Endothelial cell of umbilical vein (primary cell): ENCODE measurements at regions of chr17 and their contacts with region 1.

Region 1: DNA sequence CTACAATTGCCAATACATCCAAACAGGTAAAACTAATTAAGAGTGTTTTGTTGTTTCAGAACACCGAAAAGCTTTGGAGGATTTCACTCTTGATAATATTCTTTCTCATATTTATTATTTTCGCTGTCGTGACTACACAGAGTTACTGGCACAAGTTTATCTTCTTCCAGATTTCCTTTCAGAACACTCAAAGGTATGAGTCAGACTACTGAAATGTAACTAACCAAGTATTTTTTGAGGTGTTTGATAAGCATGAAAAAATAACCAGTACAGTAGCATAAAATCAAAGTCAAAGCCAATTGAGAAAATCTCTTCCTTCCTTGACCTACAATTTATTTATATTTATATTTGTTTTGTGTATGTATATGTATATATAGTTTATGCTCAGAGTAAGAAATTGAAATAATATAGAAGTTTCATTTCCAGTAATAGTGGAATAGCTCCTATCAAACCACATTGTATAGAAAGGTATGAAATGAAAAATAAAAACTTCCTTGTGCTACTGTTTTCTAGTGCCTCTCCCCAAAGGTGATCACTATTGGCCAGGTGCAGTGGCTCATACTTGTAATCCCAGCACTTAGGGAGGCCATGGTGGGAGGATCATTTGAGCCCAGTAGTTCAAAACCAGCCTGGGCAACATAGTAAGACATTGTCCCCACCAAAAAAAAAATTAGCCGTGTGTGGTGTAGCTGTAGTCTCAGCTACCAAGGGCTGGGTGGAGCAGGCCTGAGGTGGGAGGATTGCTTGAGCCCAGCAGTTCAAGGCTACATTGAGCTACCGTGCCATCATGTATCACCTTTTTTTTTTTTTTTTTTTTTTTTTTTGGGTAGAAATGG is 11.0 kb downstream of the RAD51C start:
- DNase-seq: peak; percentile 86
- H3K4me3 ChIP-seq: peak overlapping the region in 1 of 3 experiments; percentile 15
- H3K27ac ChIP-seq: peak overlapping the region; percentile 97
- H3K4me1 ChIP-seq: peaks cover 18% of the 10 kb centered on the region
- H3K27me3 ChIP-seq: no peaks in the 10 kb centered on the region
- CTCF ChIP-seq: no peak
- POLR2A ChIP-seq: peak; percentile 40

Region 2: GRCh38 chr17:58692239-58693055 is 10.9 kb before region 1 on chr17 and contains the start of gene RAD51C:
- CTCF ChIA-PET with region 1: interaction called, 7 read pairs
- POLR2A ChIA-PET with region 1: interaction called, 3 read pairs
- dilution Hi-C with region 1: no loop called
- intact Hi-C with region 1: loop called (anchors 1 kb)
- DNase-seq: peak; percentile 82
- H3K4me3 ChIP-seq: peak within 1 kb of the TSS; percentile 8 to 69 (median 65)
- H3K27ac ChIP-seq: peak within 1 kb of the TSS; percentile 50
- H3K4me1 ChIP-seq: peaks cover 14% of the 10 kb centered on the region
- H3K27me3 ChIP-seq: no peaks in the 10 kb centered on the region
- CTCF ChIP-seq: no peak
- POLR2A ChIP-seq: peak; percentile 87
- total RNA-seq, gene RAD51C: 38.9 and 50.5 TPM in 2 replicates

Region 3: GRCh38 chr17:58734040-58734872 is 30.9 kb after region 1 on chr17:
- CTCF ChIA-PET with region 1: no interaction called
- POLR2A ChIA-PET with region 1: no interaction called
- dilution Hi-C with region 1: no loop called
- intact Hi-C with region 1: no loop called
- DNase-seq: no peak
- H3K4me3 ChIP-seq: no peak overlapping the region
- H3K27ac ChIP-seq: no peak overlapping the region
- H3K4me1 ChIP-seq: no peaks in the 10 kb centered on the region
- H3K27me3 ChIP-seq: no peaks in the 10 kb centered on the region
- CTCF ChIP-seq: no peak
- POLR2A ChIP-seq: no peak

Region 4: GRCh38 chr17:58789160-58789559 is 85.8 kb after region 1 on chr17:
- CTCF ChIA-PET with region 1: no interaction called
- POLR2A ChIA-PET with region 1: no interaction called
- dilution Hi-C with region 1: no loop called
- intact Hi-C with region 1: no loop called
- DNase-seq: no peak
- H3K4me3 ChIP-seq: no peak overlapping the region
- H3K27ac ChIP-seq: no peak overlapping the region
- H3K4me1 ChIP-seq: peaks cover 2% of the 10 kb centered on the region
- H3K27me3 ChIP-seq: no peaks in the 10 kb centered on the region
- CTCF ChIP-seq: no peak
- POLR2A ChIP-seq: no peak